Heart right ventricle (tissue), 16 donors: ENCODE measurements at regions of chr17 and their contacts with region 1.

Region 1: GRCh38 chr17:10618202-10618635 is 38.9 kb downstream of the MYH3 start:
- DNase-seq: peak; percentile 38 to 53
- ATAC-seq: peak; percentile 67 to 90 (median 86)
- H3K4me3 ChIP-seq: no peak overlapping the region
- H3K27ac ChIP-seq: no peak overlapping the region
- H3K4me1 ChIP-seq: peaks cover 0 to 12% (median 2%) of the 10 kb centered on the region in 9 donors
- H3K27me3 ChIP-seq: peaks cover 0 to 6% (median 0%) of the 10 kb centered on the region in 7 donors
- CTCF ChIP-seq: peak; percentile 61 to 90 (median 86)

Region 2: DNA sequence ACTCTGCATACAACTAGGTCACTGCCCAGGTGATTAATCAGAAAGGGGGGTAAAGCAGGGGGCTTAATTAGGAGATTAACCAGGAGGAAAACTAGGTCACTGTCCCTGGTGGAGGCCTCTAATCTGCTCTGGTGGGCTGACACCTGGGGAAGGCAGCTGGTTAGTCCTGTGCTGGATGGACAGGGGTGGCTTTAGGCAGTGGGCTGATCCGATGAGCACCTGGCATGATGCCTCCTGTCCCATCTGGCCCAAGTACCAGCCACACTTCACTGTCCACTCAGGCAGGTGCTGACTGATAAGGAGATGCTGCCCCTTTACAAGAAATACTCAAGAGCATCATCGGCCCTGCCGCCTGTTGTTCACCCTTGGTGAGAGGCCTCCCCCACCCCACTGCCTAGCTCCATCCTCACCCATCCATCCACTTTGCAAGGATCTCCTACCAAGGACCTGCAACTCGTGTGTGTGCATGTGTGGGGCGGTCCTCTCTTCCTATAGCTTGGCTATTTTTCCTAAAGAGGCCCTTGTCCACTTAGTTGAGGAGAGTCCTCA is 699.3 kb before region 1 on chr17:
- intact Hi-C with region 1: loop called in 8 of 10 experiments (anchors 2 to 10 kb)
- DNase-seq: no peak
- ATAC-seq: no peak
- H3K4me3 ChIP-seq: no peak overlapping the region
- H3K27ac ChIP-seq: no peak overlapping the region
- H3K4me1 ChIP-seq: no peaks in the 10 kb centered on the region
- H3K27me3 ChIP-seq: no peaks in the 10 kb centered on the region
- CTCF ChIP-seq: no peak

Region 3: GRCh38 chr17:10295728-10296343 is 322.4 kb before region 1 on chr17:
- intact Hi-C with region 1: loop called in 1 of 10 experiments (anchors 10 kb)
- DNase-seq: peak; percentile 21 to 40
- ATAC-seq: peak in 5 of 8 donors; percentile 41 to 53 (median 48)
- H3K4me3 ChIP-seq: no peak overlapping the region
- H3K27ac ChIP-seq: no peak overlapping the region
- H3K4me1 ChIP-seq: peaks cover 0 to 6% (median under 1%) of the 10 kb centered on the region in 9 donors
- H3K27me3 ChIP-seq: peaks cover 0 to 14% (median 8%) of the 10 kb centered on the region in 7 donors
- CTCF ChIP-seq: peak; percentile 21 to 74 (median 64)

Region 4: GRCh38 chr17:10337976-10338375 is 280.2 kb before region 1 on chr17:
- intact Hi-C with region 1: loop called in 2 of 10 experiments (anchors 5 to 10 kb)
- DNase-seq: no peak
- ATAC-seq: no peak
- H3K4me3 ChIP-seq: no peak overlapping the region
- H3K27ac ChIP-seq: no peak overlapping the region
- H3K4me1 ChIP-seq: no peaks in the 10 kb centered on the region
- H3K27me3 ChIP-seq: no peaks in the 10 kb centered on the region
- CTCF ChIP-seq: no peak